Adrenal gland (tissue), 19 donors: ENCODE measurements at regions of chr1 and their contacts with region 1.

Region 1: DNA sequence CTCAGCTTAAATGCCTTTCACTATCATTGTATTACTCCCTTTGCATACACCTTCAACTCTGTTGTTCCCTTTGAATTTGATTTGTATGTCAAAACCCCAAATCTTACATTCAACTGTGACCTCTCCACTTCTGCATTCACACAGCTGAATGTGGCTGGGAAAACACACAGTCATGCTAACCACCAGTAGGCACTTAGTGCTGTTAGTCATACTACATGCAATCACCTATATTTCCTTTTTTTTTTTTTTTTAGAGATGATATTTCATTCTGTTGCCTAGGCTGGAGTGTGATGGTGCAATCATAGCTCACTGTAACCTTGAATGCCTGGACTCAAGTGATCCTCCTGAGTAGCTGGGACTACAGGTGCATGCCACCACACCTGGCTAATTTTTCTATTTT is 16.2 kb downstream of the BTBD8 start:
- DNase-seq: peak in 1 of 7 donors; percentile 12
- H3K4me3 ChIP-seq: no peak overlapping the region
- H3K27ac ChIP-seq: no peak overlapping the region
- H3K4me1 ChIP-seq: peaks cover 0 to 11% of the 10 kb centered on the region in 2 donors
- H3K27me3 ChIP-seq: no peaks in the 10 kb centered on the region
- CTCF ChIP-seq: no peak
- POLR2A ChIP-seq: no peak

Region 2: DNA sequence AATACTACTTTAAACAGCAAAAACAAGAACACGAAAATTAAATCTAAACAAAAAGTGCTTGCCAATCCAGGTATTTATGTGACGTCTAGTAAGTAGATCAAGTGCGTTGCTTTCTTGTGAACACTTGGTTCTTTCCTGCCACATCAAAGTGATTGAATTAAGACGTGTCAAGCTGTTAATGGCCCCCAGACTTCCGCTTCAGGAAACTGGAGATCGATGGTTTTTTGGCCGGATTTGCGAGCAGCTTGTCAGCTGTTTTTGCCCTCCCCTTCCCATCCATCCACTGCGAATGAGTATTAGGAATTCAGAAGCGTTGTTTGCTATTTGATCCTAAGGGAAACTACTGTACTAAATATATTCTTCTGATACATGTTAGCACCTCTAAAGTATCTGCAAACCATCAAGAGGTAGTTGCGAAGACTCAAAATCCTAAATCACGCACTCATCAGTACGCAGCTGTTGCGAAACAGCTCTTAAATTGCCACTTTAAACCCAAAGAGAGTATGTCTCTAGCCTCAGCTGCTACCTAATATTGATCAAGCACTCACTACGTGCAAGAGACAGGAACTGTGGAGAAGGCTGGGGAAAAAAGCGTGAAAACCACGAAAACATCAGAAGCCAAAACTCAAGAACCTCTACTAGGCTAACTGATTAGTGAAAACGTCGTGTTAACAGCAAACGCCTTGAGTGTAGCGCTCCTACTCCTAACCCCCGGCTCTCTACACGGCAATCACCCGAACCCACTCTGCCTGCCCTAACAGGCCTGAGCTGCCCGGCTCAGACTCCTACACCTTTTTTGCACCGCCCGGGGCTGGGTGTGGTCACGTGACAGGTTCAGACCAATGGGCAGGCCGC is 147.6 kb before region 1 on chr1:
- intact Hi-C with region 1: loop called in 1 of 2 experiments (anchors 10 kb)
- DNase-seq: no peak
- H3K4me3 ChIP-seq: no peak overlapping the region
- H3K27ac ChIP-seq: no peak overlapping the region
- H3K4me1 ChIP-seq: no peaks in the 10 kb centered on the region
- H3K27me3 ChIP-seq: no peaks in the 10 kb centered on the region
- CTCF ChIP-seq: no peak
- POLR2A ChIP-seq: no peak

Region 3: GRCh38 chr1:92342401-92342800 is 246.1 kb after region 1 on chr1:
- intact Hi-C with region 1: no loop called
- DNase-seq: no peak
- H3K4me3 ChIP-seq: no peak overlapping the region
- H3K27ac ChIP-seq: no peak overlapping the region
- H3K4me1 ChIP-seq: no peaks in the 10 kb centered on the region
- H3K27me3 ChIP-seq: no peaks in the 10 kb centered on the region
- CTCF ChIP-seq: no peak
- POLR2A ChIP-seq: no peak